Panc1 (cell line): ENCODE measurements at regions of chr5 and their contacts with region 1.

Region 1: GRCh38 chr5:170132269-170132975 is 26.7 kb downstream of the FOXI1 start:
- DNase-seq: no peak
- ATAC-seq: peak; percentile 58; the same call in 1 of the 2 replicates
- H3K4me3 ChIP-seq: no peak overlapping the region
- H3K27ac ChIP-seq: peak overlapping the region; percentile 58; the same call in 1 of the 2 replicates
- H3K4me1 ChIP-seq: peaks cover 5% of the 10 kb centered on the region; the same call in 1 of the 2 replicates
- H3K27me3 ChIP-seq: no peaks in the 10 kb centered on the region
- CTCF ChIP-seq: no peak

Region 2: GRCh38 chr5:170120576-170120975 is 11.8 kb before region 1 on chr5:
- CTCF ChIA-PET with region 1: no interaction called
- POLR2A ChIA-PET with region 1: no interaction called
- in situ Hi-C with region 1: no loop called
- intact Hi-C with region 1: no loop called
- DNase-seq: no peak
- ATAC-seq: no peak
- H3K4me3 ChIP-seq: no peak overlapping the region
- H3K27ac ChIP-seq: peak overlapping the region; percentile 63; the same call in 1 of the 2 replicates
- H3K4me1 ChIP-seq: no peaks in the 10 kb centered on the region; the same call in none of the 2 replicates
- H3K27me3 ChIP-seq: no peaks in the 10 kb centered on the region
- CTCF ChIP-seq: no peak

Region 3: GRCh38 chr5:170168002-170168401 is 35.6 kb after region 1 on chr5:
- CTCF ChIA-PET with region 1: no interaction called
- POLR2A ChIA-PET with region 1: interaction called, 18 read pairs
- in situ Hi-C with region 1: no loop called
- intact Hi-C with region 1: no loop called
- DNase-seq: no peak
- ATAC-seq: no peak
- H3K4me3 ChIP-seq: no peak overlapping the region
- H3K27ac ChIP-seq: peak overlapping the region; percentile 67; the same call in 1 of the 2 replicates
- H3K4me1 ChIP-seq: peaks cover 13% of the 10 kb centered on the region
- H3K27me3 ChIP-seq: no peaks in the 10 kb centered on the region
- CTCF ChIP-seq: no peak